Naive thymus-derived CD8-positive, alpha-beta T cell (primary cell): ENCODE measurements at regions of chr14 and their contacts with region 1.

Region 1: GRCh38 chr14:68283378-68284123 is 464.0 kb downstream of the RAD51B start:
- DNase-seq: peak; percentile 22 to 78 (median 60)
- ATAC-seq: peak; percentile 66 to 73
- H3K4me3 Mint-ChIP-seq: peak overlapping the region; percentile 49 to 82 (median 68)
- H3K27ac Mint-ChIP-seq: peak overlapping the region; percentile 94 to 99 (median 98)
- H3K4me1 Mint-ChIP-seq: peaks cover 40 to 97% (median 86%) of the 10 kb centered on the region in 4 donors
- H3K27me3 Mint-ChIP-seq: no peaks in the 10 kb centered on the region

Region 2: GRCh38 chr14:68248481-68249255 is 34.9 kb before region 1 on chr14:
- POLR2A ChIA-PET with region 1: interaction called, 15 read pairs
- DNase-seq: peak in 6 of 10 donors; percentile 23 to 66 (median 46)
- ATAC-seq: peak; percentile 79 to 82
- H3K4me3 Mint-ChIP-seq: peak overlapping the region in 1 of 10 donors; percentile 49
- H3K27ac Mint-ChIP-seq: peak overlapping the region in 7 of 10 donors; percentile 9 to 68 (median 37)
- H3K4me1 Mint-ChIP-seq: peaks cover 12 to 54% (median 34%) of the 10 kb centered on the region in 4 donors
- H3K27me3 Mint-ChIP-seq: no peaks in the 10 kb centered on the region

Region 3: GRCh38 chr14:68268197-68268596 is 15.4 kb before region 1 on chr14:
- POLR2A ChIA-PET with region 1: interaction called, 12 read pairs
- DNase-seq: peak in 1 of 10 donors; percentile 45
- ATAC-seq: peak; percentile 55 to 67
- H3K4me3 Mint-ChIP-seq: peak overlapping the region in 8 of 10 donors; percentile 6 to 69 (median 40)
- H3K27ac Mint-ChIP-seq: peak overlapping the region; percentile 67 to 91 (median 80)
- H3K4me1 Mint-ChIP-seq: peaks cover 30 to 81% (median 46%) of the 10 kb centered on the region in 4 donors
- H3K27me3 Mint-ChIP-seq: no peaks in the 10 kb centered on the region

Region 4: DNA sequence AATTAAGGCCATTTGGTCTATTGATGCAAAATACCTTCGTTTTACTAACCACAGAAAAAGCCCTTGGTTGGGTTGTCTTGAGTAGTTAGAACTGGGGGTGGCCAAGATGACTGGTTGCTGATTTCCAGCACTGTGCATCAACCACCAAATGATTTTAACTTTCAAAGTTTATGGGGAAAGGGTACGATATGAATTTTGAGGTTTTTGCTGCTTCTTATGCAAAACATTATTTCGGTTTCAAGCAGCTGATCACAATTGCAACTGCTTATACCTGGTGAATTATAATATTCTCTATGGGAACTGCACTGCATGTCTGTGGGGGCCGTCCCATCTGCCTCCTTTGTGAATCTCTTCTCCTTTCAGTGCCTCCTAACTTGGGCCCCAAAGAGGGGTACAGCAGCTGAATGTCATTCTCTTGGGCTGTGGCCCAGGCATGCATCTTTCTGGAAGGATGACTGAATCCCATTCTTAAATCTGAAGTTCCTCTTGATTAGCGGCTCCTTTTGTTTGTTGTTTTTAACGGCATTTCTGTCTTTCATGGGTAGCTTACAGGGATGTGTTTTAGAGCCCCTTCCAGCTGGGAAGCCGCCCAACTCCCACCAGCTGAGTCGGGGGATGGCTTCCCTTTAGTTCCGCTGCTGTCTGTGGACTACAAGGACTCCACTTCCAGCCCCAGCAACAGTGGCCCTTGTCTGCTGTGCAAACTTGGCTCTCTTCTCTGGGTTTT is 29.5 kb after region 1 on chr14:
- POLR2A ChIA-PET with region 1: no interaction called
- DNase-seq: no peak
- ATAC-seq: no peak
- H3K4me3 Mint-ChIP-seq: no peak overlapping the region
- H3K27ac Mint-ChIP-seq: peak overlapping the region in 4 of 10 donors; percentile 6 to 65 (median 13)
- H3K4me1 Mint-ChIP-seq: peaks cover 7 to 60% (median 13%) of the 10 kb centered on the region in 4 donors
- H3K27me3 Mint-ChIP-seq: no peaks in the 10 kb centered on the region

Region 5: GRCh38 chr14:68685419-68686204 is 402.1 kb after region 1 on chr14:
- POLR2A ChIA-PET with region 1: interaction called, 12 read pairs
- DNase-seq: peak; percentile 39 to 93 (median 80)
- ATAC-seq: peak; percentile 86 to 88
- H3K4me3 Mint-ChIP-seq: peak overlapping the region in 9 of 10 donors; percentile 32 to 77 (median 72)
- H3K27ac Mint-ChIP-seq: peak overlapping the region; percentile 93 to 98 (median 96)
- H3K4me1 Mint-ChIP-seq: peaks cover 36 to 82% (median 70%) of the 10 kb centered on the region in 4 donors
- H3K27me3 Mint-ChIP-seq: no peaks in the 10 kb centered on the region

Region 6: GRCh38 chr14:68816262-68816942 is 532.9 kb after region 1 on chr14:
- POLR2A ChIA-PET with region 1: interaction called, 51 read pairs
- DNase-seq: peak; percentile 80 to 94 (median 90)
- ATAC-seq: peak; percentile 79 to 81
- H3K4me3 Mint-ChIP-seq: peak overlapping the region; percentile 77 to 96 (median 87)
- H3K27ac Mint-ChIP-seq: peak overlapping the region; percentile 92 to 100 (median 97)
- H3K4me1 Mint-ChIP-seq: peaks cover 34 to 84% (median 69%) of the 10 kb centered on the region in 4 donors
- H3K27me3 Mint-ChIP-seq: no peaks in the 10 kb centered on the region